Heart right ventricle (tissue), 16 donors: ENCODE measurements at regions of chr11 and their contacts with region 1.

Region 1: GRCh38 chr11:86388198-86388597 is 13.5 kb downstream of the CCDC81 start:
- DNase-seq: no peak
- ATAC-seq: no peak
- H3K4me3 ChIP-seq: no peak overlapping the region
- H3K27ac ChIP-seq: no peak overlapping the region
- H3K4me1 ChIP-seq: no peaks in the 10 kb centered on the region
- H3K27me3 ChIP-seq: no peaks in the 10 kb centered on the region
- CTCF ChIP-seq: no peak

Region 2: GRCh38 chr11:86431258-86431657 is 43.1 kb after region 1 on chr11:
- intact Hi-C with region 1: loop called in 1 of 10 experiments (anchors 2 kb)
- DNase-seq: no peak
- ATAC-seq: no peak
- H3K4me3 ChIP-seq: no peak overlapping the region
- H3K27ac ChIP-seq: no peak overlapping the region
- H3K4me1 ChIP-seq: no peaks in the 10 kb centered on the region
- H3K27me3 ChIP-seq: no peaks in the 10 kb centered on the region
- CTCF ChIP-seq: no peak

Region 3: GRCh38 chr11:86511086-86511551 is 122.9 kb after region 1 on chr11:
- intact Hi-C with region 1: no loop called
- DNase-seq: no peak
- ATAC-seq: peak in 2 of 8 donors; percentile 6 to 32
- H3K4me3 ChIP-seq: no peak overlapping the region
- H3K27ac ChIP-seq: no peak overlapping the region
- H3K4me1 ChIP-seq: peaks cover 0 to 39% (median 25%) of the 10 kb centered on the region in 9 donors
- H3K27me3 ChIP-seq: no peaks in the 10 kb centered on the region
- CTCF ChIP-seq: no peak

Region 4: GRCh38 chr11:86570020-86570419 is 181.8 kb after region 1 on chr11:
- intact Hi-C with region 1: no loop called
- DNase-seq: no peak
- ATAC-seq: no peak
- H3K4me3 ChIP-seq: no peak overlapping the region
- H3K27ac ChIP-seq: no peak overlapping the region
- H3K4me1 ChIP-seq: peaks cover 0 to 36% (median 15%) of the 10 kb centered on the region in 9 donors
- H3K27me3 ChIP-seq: no peaks in the 10 kb centered on the region
- CTCF ChIP-seq: no peak